BJ (cell line): ENCODE measurements at regions of chr20 and their contacts with region 1.

Region 1: GRCh38 chr20:35871311-35871771 is 83.0 kb downstream of the SCAND1 start:
- DNase-seq: no peak
- H3K4me3 ChIP-seq: no peak overlapping the region
- H3K27me3 ChIP-seq: no peaks in the 10 kb centered on the region
- CTCF ChIP-seq: no peak

Region 2: DNA sequence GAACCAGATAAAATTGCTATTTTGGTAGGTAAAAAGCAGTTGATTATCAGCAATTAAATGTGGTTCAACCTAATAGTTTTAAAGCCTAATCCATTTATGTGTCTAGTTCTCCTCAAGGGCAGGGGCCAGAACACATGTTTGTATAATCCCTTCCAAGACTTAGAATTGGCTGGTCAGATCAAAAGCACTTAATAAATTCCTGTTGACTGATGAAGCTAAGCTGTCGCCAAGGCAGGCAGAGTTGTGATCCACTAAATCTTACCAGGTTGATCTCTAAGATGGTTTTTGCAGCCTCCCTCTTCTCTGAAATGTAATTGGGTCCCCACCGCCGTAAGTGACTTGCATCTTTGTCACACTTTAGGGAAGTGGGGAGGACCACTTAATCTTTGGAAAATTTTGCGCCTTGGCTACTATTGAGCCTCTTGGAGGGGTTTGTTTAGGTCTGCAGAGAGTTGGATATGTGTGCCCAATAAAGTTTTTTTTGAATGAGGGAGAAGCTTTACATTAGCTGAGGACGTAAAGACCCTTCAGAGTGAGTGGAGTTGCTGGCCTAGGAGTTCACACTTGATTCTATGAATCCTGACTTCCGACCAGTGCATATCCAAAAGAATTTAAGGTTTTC is 33.7 kb before region 1 on chr20:
- CTCF ChIA-PET with region 1: no interaction called
- POLR2A ChIA-PET with region 1: interaction called, 17 read pairs
- DNase-seq: no peak
- H3K4me3 ChIP-seq: no peak overlapping the region
- H3K27me3 ChIP-seq: no peaks in the 10 kb centered on the region
- CTCF ChIP-seq: no peak

Region 3: GRCh38 chr20:35883778-35884540 is 12.6 kb after region 1 on chr20:
- CTCF ChIA-PET with region 1: interaction called, 10 read pairs
- POLR2A ChIA-PET with region 1: no interaction called
- DNase-seq: peak; percentile 99
- H3K4me3 ChIP-seq: peak overlapping the region; percentile 15
- H3K27me3 ChIP-seq: no peaks in the 10 kb centered on the region
- CTCF ChIP-seq: peak; percentile 61